PC-9 (cell line): ENCODE measurements at regions of chr4 and their contacts with region 1.

Region 1: DNA sequence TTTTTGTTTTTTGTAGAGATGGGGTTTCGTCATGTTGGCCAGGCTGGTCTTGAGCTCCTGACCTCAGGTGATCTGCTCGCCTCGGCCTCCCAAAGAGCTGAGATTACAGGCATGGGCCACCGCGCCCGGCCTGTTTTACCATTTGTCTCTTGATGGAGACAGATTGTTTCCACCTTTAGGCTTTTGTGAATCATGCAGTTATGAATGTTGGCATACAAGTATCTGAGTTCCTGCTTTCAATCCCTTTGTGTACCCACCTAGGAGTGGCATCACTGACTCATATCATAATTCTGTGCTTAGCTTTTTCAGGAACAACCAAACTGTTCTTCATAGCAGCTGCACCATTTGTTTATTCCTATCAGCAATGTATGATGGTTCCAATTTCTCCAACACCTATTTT is 20.2 kb upstream of the MGST2 start:
- DNase-seq: peak; percentile 88 to 99
- H3K4me3 ChIP-seq: no peak overlapping the region
- H3K27ac ChIP-seq: peak overlapping the region; percentile 82
- H3K4me1 ChIP-seq: peaks cover 64% of the 10 kb centered on the region
- H3K27me3 ChIP-seq: no peaks in the 10 kb centered on the region
- CTCF ChIP-seq: no peak

Region 2: DNA sequence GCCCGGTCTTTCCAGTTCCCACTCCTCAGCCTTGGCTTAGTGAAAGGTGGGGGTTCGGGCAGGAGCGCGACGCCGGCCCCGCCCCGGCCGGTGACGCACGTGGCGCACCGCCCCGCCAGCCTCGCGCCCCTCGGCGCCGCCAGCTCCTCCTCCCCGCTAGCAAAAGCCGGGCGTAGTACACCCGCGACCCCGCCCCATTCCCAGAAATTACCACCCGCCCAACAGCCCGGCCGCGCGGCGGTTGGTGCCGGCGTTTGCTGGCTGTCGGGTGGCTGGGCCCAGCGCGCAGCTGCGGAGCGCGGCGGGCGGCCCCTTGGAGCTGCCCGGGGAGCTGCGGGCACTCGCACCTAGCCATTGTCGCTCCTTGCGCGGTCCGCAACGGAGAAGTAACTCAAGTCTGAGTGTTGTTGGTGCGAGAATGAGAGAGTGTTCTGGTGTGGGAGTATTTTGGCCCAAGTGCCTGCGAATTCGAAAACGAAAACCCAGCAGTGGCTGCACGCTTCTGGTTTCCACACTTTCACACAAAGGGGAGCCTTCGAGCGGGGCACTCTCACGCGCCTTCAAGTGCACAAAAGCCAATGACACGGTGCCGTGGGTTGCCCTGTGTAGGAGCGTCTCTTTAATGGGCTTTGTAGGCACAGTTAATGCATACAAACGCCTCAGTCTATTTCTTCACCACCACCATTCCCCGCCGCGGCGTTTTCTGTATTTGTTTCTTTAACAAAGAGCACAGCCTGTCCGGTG is 467.4 kb before region 1 on chr4:
- CTCF ChIA-PET with region 1: no interaction called
- POLR2A ChIA-PET with region 1: no interaction called
- intact Hi-C with region 1: loop called (anchors 5 kb)
- DNase-seq: peak; percentile 69 to 97
- H3K4me3 ChIP-seq: peak overlapping the region; percentile 83
- H3K27ac ChIP-seq: peak overlapping the region; percentile 21
- H3K4me1 ChIP-seq: peaks cover 11% of the 10 kb centered on the region
- H3K27me3 ChIP-seq: no peaks in the 10 kb centered on the region
- CTCF ChIP-seq: no peak

Region 3: GRCh38 chr4:139453371-139454110 is 191.9 kb before region 1 on chr4:
- CTCF ChIA-PET with region 1: no interaction called
- POLR2A ChIA-PET with region 1: no interaction called
- intact Hi-C with region 1: no loop called
- DNase-seq: peak; percentile 86 to 96
- H3K4me3 ChIP-seq: peak overlapping the region; percentile 90
- H3K27ac ChIP-seq: peak overlapping the region; percentile 79
- H3K4me1 ChIP-seq: peaks cover 38% of the 10 kb centered on the region
- H3K27me3 ChIP-seq: no peaks in the 10 kb centered on the region
- CTCF ChIP-seq: peak; percentile 16; the same call in 1 of the 2 replicates

Region 4: GRCh38 chr4:139554893-139555704 is 90.4 kb before region 1 on chr4:
- CTCF ChIA-PET with region 1: no interaction called
- POLR2A ChIA-PET with region 1: interaction called, 7 read pairs
- intact Hi-C with region 1: loop called (anchors 1 kb)
- DNase-seq: peak; percentile 62 to 88
- H3K4me3 ChIP-seq: peak overlapping the region; percentile 87
- H3K27ac ChIP-seq: peak overlapping the region; percentile 67
- H3K4me1 ChIP-seq: peaks cover 27% of the 10 kb centered on the region
- H3K27me3 ChIP-seq: no peaks in the 10 kb centered on the region
- CTCF ChIP-seq: no peak

Region 5: GRCh38 chr4:140720387-140721304 is 1075.2 kb after region 1 on chr4:
- CTCF ChIA-PET with region 1: no interaction called
- POLR2A ChIA-PET with region 1: interaction called, 10 read pairs
- intact Hi-C with region 1: no loop called
- DNase-seq: no peak
- H3K4me3 ChIP-seq: no peak overlapping the region
- H3K27ac ChIP-seq: no peak overlapping the region
- H3K4me1 ChIP-seq: peaks cover 32% of the 10 kb centered on the region
- H3K27me3 ChIP-seq: no peaks in the 10 kb centered on the region
- CTCF ChIP-seq: no peak